Activated B cell treated with CpG ODN at 0.5 μM for 24 hours (primary cell): ENCODE measurements at regions of chr15 and their contacts with region 1.

Region 1: GRCh38 chr15:99542828-99543227 is 23.0 kb upstream of the MEF2A start:
- DNase-seq: no peak
- ATAC-seq: no peak
- H3K4me3 Mint-ChIP-seq: no peak overlapping the region
- H3K27ac Mint-ChIP-seq: no peak overlapping the region
- H3K4me1 Mint-ChIP-seq: no peaks in the 10 kb centered on the region
- H3K27me3 Mint-ChIP-seq: no peaks in the 10 kb centered on the region
- CTCF ChIP-seq: no peak

Region 2: DNA sequence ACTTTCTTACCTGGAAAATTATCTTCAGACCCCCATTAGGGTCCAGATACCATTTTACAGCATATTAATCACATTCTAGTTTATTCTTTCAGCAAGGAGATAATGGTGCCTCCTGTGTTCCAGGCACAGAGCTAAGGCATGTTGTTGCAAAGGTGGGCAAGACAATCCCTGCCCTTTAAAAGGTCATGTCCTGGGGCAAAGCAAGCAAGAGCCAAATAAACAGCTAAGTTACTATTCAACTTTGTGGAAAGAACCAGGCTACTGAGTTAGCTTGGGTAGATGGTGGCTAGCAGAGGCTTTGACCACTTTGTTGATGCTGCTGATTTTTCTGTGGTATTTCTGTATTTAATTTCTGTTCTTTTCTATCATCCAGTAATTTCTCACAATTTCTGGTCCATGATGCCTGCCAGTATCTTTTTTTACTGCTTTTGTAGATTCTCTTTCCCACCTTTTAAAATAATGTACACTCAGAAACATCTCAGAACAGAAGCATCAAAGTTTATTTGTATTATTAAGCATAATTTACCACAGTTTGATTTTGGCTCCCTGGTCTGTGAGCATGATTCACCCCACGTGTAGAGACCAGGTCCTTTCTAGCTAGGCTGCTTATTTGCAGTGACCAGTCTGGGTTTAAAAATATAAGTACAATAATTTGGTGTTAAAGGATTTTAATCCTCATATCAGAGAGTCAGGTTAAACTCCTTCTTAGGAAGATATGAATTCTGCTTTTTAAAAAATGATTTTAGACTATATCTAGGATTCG is 220.0 kb before region 1 on chr15:
- CTCF ChIA-PET with region 1: no interaction called
- POLR2A ChIA-PET with region 1: no interaction called
- intact Hi-C with region 1: no loop called
- DNase-seq: no peak
- ATAC-seq: no peak
- H3K4me3 Mint-ChIP-seq: no peak overlapping the region
- H3K27ac Mint-ChIP-seq: no peak overlapping the region
- H3K4me1 Mint-ChIP-seq: peaks cover 32% of the 10 kb centered on the region
- H3K27me3 Mint-ChIP-seq: no peaks in the 10 kb centered on the region
- CTCF ChIP-seq: no peak

Region 3: DNA sequence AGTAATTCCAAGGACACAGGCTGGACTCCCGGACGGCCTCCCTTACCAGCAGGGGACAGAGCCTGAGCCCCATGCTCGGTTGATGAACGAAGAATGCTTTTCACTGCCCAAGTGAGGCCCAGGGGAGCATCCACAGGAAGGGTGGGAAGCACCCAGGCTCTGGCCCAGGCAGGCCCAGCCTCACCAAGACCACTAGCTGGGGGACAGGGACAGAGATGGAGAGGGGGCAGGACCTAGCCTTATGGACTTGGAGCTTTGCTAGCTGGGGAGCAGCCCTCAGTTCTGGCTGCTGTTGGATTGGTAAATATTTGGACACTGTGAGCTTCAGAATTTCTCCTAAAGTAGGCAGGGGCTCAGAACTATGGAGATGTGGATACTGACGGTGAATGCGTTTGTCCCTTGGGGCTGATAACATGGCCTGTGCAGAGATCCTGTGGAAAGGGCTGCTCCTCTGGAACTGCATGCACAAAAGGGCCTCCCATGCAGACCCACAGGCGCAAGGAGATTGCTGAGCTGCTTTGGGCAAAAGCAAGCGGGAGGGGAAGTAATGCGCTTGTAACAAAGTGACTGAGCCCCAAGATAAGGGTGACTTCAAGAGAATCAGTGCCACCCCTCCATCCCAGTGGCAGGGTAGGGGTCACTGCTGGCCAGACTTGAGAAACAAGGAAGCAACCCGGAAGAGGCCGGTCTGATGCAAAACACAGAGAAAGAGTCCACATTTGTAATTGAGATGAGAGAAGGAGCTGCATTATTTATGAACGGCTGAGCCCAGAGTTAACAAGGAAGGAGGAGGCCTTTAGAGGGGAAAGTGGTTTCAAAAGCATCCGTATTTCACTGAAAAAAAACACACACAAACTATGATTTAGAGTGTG is 47.2 kb before region 1 on chr15:
- CTCF ChIA-PET with region 1: no interaction called
- POLR2A ChIA-PET with region 1: no interaction called
- intact Hi-C with region 1: no loop called
- DNase-seq: no peak
- ATAC-seq: peak; percentile 28
- H3K4me3 Mint-ChIP-seq: peak overlapping the region; percentile 59
- H3K27ac Mint-ChIP-seq: peak overlapping the region; percentile 63
- H3K4me1 Mint-ChIP-seq: peaks cover 27% of the 10 kb centered on the region
- H3K27me3 Mint-ChIP-seq: no peaks in the 10 kb centered on the region
- CTCF ChIP-seq: no peak

Region 4: GRCh38 chr15:99514306-99514705 is 28.5 kb before region 1 on chr15:
- CTCF ChIA-PET with region 1: no interaction called
- POLR2A ChIA-PET with region 1: no interaction called
- intact Hi-C with region 1: loop called (anchors 2 kb)
- DNase-seq: no peak
- ATAC-seq: peak; percentile 11
- H3K4me3 Mint-ChIP-seq: peak overlapping the region; percentile 67
- H3K27ac Mint-ChIP-seq: peak overlapping the region; percentile 97
- H3K4me1 Mint-ChIP-seq: peaks cover 72% of the 10 kb centered on the region
- H3K27me3 Mint-ChIP-seq: no peaks in the 10 kb centered on the region
- CTCF ChIP-seq: no peak